AG04449 (cell line): ENCODE measurements at regions of chrX and their contacts with region 1.

Region 1: DNA sequence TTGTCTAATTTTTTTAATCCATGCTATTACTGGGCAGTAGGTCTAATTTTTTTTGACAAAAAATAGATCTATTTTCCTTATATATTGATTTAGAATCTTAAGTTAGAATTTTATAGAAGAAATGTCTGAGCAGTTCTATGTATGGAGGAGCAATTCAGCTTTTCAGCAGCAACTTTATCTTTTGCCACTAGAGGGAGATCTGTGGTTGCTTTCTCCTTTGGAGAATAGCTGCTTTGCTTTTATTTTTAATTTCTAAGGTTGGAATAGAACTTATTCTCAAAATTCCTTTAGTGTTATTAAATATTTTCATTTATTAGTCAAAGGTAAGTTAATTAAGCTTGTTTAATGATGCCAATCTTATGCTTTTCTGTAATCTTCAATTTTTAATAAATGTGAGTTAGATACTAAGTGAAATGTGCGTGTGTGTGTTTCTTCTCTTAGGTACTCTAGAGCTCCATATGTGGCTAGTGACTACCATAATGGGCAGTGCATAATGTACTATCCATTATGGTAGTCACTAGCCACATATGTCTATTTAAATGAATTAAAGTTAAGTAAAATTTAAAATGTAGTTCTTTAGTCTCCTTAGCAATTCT is 29.3 kb downstream of the FAM199X start:
- DNase-seq: no peak
- H3K4me3 ChIP-seq: no peak overlapping the region
- CTCF ChIP-seq: peak; percentile 48

Region 2: DNA sequence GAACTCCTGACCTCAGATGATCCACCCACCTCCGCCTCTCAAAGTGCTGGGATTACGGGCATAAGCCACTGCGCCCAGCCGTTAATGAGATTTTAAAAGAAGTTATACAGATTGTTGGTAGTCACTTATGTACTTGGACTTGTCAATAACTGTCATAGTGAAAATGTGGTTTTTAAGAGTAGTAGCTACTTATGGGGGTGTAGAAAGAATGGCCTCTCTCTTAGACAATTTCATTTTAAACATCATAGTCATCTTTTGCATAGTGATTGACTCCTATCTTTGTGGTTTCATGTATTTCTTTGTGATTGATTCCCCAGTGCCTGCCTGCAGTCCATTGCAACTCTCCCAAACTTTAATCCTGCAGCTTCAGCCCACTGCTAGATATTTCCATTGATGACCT is 11.9 kb before region 1 on chrX:
- CTCF ChIA-PET with region 1: interaction called, 13 read pairs
- POLR2A ChIA-PET with region 1: no interaction called
- DNase-seq: no peak
- H3K4me3 ChIP-seq: no peak overlapping the region
- CTCF ChIP-seq: no peak

Region 3: GRCh38 chrX:104270920-104271512 is 75.4 kb after region 1 on chrX:
- CTCF ChIA-PET with region 1: interaction called, 14 read pairs
- POLR2A ChIA-PET with region 1: no interaction called
- DNase-seq: no peak
- H3K4me3 ChIP-seq: peak overlapping the region; percentile 31
- CTCF ChIP-seq: peak; percentile 51